Breast epithelium (tissue), 4 donors: ENCODE measurements at regions of chr11 and their contacts with region 1.

Region 1: GRCh38 chr11:64472593-64473455 is 113.9 kb downstream of the RPS6KA4 start:
- DNase-seq: no peak
- H3K4me3 ChIP-seq: no peak overlapping the region
- H3K27ac ChIP-seq: no peak overlapping the region
- H3K4me1 ChIP-seq: no peaks in the 10 kb centered on the region
- H3K27me3 ChIP-seq: no peaks in the 10 kb centered on the region
- CTCF ChIP-seq: no peak
- POLR2A ChIP-seq: no peak

Region 2: GRCh38 chr11:63855975-63856749 is 616.7 kb before region 1 on chr11:
- intact Hi-C with region 1: no loop called
- DNase-seq: no peak
- H3K4me3 ChIP-seq: no peak overlapping the region
- H3K27ac ChIP-seq: no peak overlapping the region
- H3K4me1 ChIP-seq: no peaks in the 10 kb centered on the region
- H3K27me3 ChIP-seq: no peaks in the 10 kb centered on the region
- CTCF ChIP-seq: no peak
- POLR2A ChIP-seq: no peak

Region 3: GRCh38 chr11:63970902-63971301 is 501.9 kb before region 1 on chr11:
- intact Hi-C with region 1: no loop called
- DNase-seq: no peak
- H3K4me3 ChIP-seq: no peak overlapping the region
- H3K27ac ChIP-seq: no peak overlapping the region
- H3K4me1 ChIP-seq: peaks cover 4 to 9% of the 10 kb centered on the region in 2 donors
- H3K27me3 ChIP-seq: no peaks in the 10 kb centered on the region
- CTCF ChIP-seq: no peak
- POLR2A ChIP-seq: no peak

Region 4: DNA sequence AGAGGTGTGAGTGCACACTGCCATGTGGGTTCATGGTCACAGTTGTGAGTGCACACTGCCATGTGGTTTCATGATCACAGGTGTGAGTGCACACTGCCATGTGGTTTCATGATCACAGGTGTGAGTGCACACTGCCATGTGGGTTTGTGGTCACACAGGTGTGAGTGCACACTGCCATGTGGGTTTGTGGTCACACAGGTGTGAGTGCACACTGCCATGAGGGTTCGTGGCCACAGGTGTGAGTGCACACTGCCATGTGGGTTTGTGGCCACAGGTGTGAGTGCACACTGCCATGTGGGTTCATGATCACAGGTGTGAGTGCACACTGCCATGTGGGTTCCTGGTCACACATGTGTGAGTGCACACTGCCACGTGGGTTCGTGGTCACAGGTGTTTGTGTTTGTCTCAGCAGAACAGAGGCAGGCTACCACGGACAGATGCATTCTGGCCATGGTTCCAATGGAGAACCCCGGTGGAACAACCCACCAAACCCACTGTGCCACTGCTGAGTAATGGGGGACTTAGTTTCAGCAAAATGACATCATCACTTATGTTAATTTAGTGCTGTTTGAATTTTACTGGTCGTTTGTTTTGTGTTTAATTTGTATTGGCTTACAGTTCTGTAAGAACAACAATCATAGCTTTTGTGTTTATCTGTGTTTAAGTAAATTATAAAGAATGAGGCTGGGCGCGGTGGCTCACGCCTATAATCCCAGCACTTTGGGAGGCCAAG is 56.7 kb before region 1 on chr11:
- intact Hi-C with region 1: loop called (anchors 2 kb)
- DNase-seq: no peak
- H3K4me3 ChIP-seq: no peak overlapping the region
- H3K27ac ChIP-seq: no peak overlapping the region
- H3K4me1 ChIP-seq: no peaks in the 10 kb centered on the region
- H3K27me3 ChIP-seq: no peaks in the 10 kb centered on the region
- CTCF ChIP-seq: no peak
- POLR2A ChIP-seq: no peak

Region 5: GRCh38 chr11:64428693-64429092 is 44.1 kb before region 1 on chr11:
- intact Hi-C with region 1: no loop called
- DNase-seq: no peak
- H3K4me3 ChIP-seq: no peak overlapping the region
- H3K27ac ChIP-seq: no peak overlapping the region
- H3K4me1 ChIP-seq: no peaks in the 10 kb centered on the region
- H3K27me3 ChIP-seq: no peaks in the 10 kb centered on the region
- CTCF ChIP-seq: no peak
- POLR2A ChIP-seq: no peak

Region 6: GRCh38 chr11:65083834-65084597 is 611.2 kb after region 1 on chr11 and contains the starts of genes CDCA5 and ZFPL1:
- intact Hi-C with region 1: no loop called
- DNase-seq: peak; percentile 95 to 96
- H3K4me3 ChIP-seq: peak within 1 kb of the TSS; percentile 75 to 85 (median 82)
- H3K27ac ChIP-seq: peak within 1 kb of the TSS; percentile 97 to 98
- H3K4me1 ChIP-seq: no peaks in the 10 kb centered on the region
- H3K27me3 ChIP-seq: no peaks in the 10 kb centered on the region
- CTCF ChIP-seq: peak in 1 of 3 donors; percentile 10
- POLR2A ChIP-seq: peak; percentile 66
- total RNA-seq, gene CDCA5: 0.96 to 1.2 (median 0.98) TPM
- total RNA-seq, gene ZFPL1: 33.8 to 44.1 (median 44.0) TPM